ENCODE measurements at regions of chr16 and their contacts with region 1.

Region 1: GRCh38 chr16:78984887-78985464 is 615.6 kb downstream of the MAF start:
- DNase-seq: peak; percentile 71
- ATAC-seq: peak; percentile 96

Region 2: GRCh38 chr16:78669994-78670393 is 315.0 kb before region 1 on chr16:
- intact Hi-C with region 1: no loop called
- DNase-seq: no peak
- ATAC-seq: peak; percentile 67

Region 3: DNA sequence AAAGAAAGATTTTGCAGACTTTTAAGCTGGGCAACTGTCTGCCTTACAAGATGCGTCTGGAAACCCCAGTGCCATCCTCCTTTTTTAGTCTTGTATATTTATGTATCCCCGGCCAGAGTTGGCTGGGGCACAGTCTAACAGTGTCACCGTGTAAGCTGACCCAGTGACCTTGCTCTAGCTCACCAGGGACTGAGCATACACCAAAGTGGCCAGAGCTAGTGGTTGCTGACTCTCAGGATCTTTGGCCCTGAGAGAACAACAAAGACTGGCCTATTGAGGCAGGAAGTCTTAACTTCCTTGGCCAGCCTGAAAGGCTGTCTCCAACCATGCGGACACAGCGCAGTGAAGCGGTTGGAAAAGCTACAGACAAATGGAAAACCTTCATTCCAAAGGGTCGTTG is 140.3 kb before region 1 on chr16:
- intact Hi-C with region 1: loop called (anchors 10 kb)
- DNase-seq: peak; percentile 71
- ATAC-seq: peak; percentile 78

Region 4: GRCh38 chr16:79169239-79169638 is 184.3 kb after region 1 on chr16:
- intact Hi-C with region 1: no loop called
- DNase-seq: no peak
- ATAC-seq: no peak